ENCODE measurements at regions of chr14 and their contacts with region 1.

Region 1: GRCh38 chr14:54566410-54567223 is at the start of gene SAMD4A:
- DNase-seq: peak; percentile 77
- H3K4me3 ChIP-seq: peak within 1 kb of the TSS; percentile 60
- H3K27ac ChIP-seq: peak within 1 kb of the TSS; percentile 99
- H3K4me1 ChIP-seq: peaks cover 5% of the 10 kb centered on the region
- H3K27me3 ChIP-seq: no peaks in the 10 kb centered on the region
- CTCF ChIP-seq: no peak
- total RNA-seq, gene SAMD4A: 5.6 to 31.3 TPM

Region 2: DNA sequence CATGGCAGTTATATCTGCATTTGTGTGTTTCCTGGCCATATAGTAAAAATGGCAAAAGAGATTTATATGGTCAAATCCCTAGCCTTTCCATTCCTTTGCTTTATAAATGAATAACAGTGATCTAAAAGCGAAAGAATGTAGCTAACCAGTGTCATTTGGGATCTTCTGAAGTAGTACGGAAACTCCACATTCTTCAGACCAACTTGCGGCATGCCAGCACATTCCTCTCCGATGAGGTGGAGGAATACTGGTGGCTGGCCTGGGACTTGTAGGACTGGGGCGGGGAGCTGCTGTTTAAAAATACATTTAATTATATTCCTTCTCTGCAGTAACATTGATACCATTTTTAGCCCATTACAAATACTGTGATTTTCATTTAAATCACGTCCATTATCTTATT is 85.6 kb after region 1 on chr14:
- intact Hi-C with region 1: no loop called
- DNase-seq: peak; percentile 44
- H3K4me3 ChIP-seq: no peak overlapping the region
- H3K27ac ChIP-seq: peak overlapping the region; percentile 54
- H3K4me1 ChIP-seq: no peaks in the 10 kb centered on the region
- H3K27me3 ChIP-seq: no peaks in the 10 kb centered on the region
- CTCF ChIP-seq: no peak

Region 3: GRCh38 chr14:54691525-54692283 is 125.1 kb after region 1 on chr14:
- intact Hi-C with region 1: loop called (anchors 5 kb)
- DNase-seq: peak; percentile 77
- H3K4me3 ChIP-seq: no peak overlapping the region
- H3K27ac ChIP-seq: no peak overlapping the region
- H3K4me1 ChIP-seq: no peaks in the 10 kb centered on the region
- H3K27me3 ChIP-seq: no peaks in the 10 kb centered on the region
- CTCF ChIP-seq: peak; percentile 75

Region 4: GRCh38 chr14:54773171-54773975 is 206.8 kb after region 1 on chr14:
- intact Hi-C with region 1: loop called (anchors 2 kb)
- DNase-seq: peak; percentile 76
- H3K4me3 ChIP-seq: no peak overlapping the region
- H3K27ac ChIP-seq: peak overlapping the region; percentile 58
- H3K4me1 ChIP-seq: peaks cover 4% of the 10 kb centered on the region
- H3K27me3 ChIP-seq: no peaks in the 10 kb centered on the region
- CTCF ChIP-seq: peak; percentile 49

Region 5: DNA sequence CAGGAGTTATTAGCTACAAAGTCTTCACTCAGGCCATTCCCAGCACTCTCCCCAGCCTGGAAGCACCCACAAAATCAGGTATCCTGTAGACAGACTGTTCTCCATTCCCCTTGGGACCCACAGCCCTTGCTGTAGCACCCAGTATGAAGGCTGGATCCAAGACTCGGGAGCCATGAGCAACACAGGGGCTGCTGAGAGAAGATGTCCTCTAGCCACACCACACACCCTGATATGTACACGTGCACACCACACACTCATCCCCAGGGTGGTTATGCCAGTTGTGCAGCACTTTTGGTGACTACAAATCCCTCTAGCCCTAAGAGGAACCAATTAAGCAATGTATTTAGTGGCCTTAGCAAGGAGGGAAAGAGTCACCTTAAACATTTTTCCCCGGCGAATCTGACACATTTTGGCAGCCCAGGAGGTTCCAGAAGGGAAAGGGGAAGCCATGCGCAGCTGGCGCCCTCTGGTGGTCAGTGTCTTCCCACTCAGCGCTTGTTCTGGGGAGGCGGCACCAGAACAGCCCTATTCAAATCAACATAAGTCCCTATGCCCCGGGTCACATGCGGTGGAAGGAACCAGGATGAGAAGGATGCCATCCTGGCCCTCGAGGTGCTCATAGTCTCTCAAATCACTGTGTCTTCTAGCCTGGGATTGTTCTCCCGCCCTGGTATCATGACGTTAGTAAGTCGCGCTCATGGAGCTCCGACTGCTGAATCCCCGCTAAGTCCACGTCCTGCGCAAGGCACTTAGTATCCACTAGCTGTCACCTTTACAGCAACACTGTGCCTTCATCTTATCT is 239.1 kb after region 1 on chr14:
- intact Hi-C with region 1: loop called (anchors 10 kb)
- DNase-seq: peak; percentile 82
- H3K4me3 ChIP-seq: no peak overlapping the region
- H3K27ac ChIP-seq: no peak overlapping the region
- H3K4me1 ChIP-seq: no peaks in the 10 kb centered on the region
- H3K27me3 ChIP-seq: no peaks in the 10 kb centered on the region
- CTCF ChIP-seq: peak; percentile 97

Region 6: GRCh38 chr14:54902521-54903420 is 336.2 kb after region 1 on chr14 and contains the start of gene GCH1:
- intact Hi-C with region 1: loop called (anchors 10 kb)
- DNase-seq: peak; percentile 89
- H3K4me3 ChIP-seq: peak within 1 kb of the TSS; percentile 96
- H3K27ac ChIP-seq: peak within 1 kb of the TSS; percentile 98
- H3K4me1 ChIP-seq: no peaks in the 10 kb centered on the region
- H3K27me3 ChIP-seq: no peaks in the 10 kb centered on the region
- CTCF ChIP-seq: peak; percentile 41
- total RNA-seq, gene GCH1: 20.4 to 30.8 TPM

Measured in colonic mucosa (tissue), 4 donors.